ENCODE measurements at regions of chr11 and their contacts with region 1.

Region 1: DNA sequence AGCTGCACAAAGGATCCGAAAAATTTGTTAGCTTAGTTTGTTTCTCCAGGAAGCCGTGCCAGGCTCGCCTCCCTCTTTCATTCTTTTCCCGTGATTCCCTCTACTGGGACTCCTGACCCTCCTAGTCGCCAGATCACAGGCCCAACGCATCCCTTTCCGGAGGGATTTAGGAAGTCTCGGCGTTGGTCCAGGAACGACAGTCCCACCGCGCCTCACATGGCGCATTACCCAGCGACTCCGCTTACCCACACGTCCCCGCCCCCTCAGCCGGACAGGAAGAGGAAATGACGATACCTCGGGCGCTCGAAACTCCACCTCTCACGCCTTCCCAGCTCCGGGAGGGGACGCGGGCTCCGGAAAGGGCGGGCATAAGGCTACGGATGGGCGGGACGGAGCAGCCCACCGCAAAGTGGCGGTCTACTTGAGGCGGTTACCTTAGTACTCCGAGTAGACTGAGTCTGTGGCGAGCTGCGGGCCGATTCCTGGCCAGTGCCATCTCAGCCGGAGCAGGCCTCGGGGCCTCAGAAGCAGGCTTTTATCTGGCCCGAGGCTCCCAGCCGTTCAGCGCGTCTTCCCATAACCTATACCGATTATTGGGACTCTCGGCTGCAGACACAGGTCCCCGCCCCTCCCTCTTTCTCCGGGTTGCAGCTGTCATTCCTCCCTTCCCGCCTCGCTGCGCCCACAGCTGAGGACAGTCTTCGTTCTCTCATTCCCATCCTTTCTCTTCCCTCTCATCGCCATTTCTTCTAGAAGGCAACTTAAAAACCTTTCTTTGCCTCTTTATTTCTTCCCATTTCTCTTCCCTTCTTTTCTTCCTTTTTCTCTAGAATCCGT is at the start of gene CCDC15:
- DNase-seq: peak; percentile 99
- H3K4me3 Mint-ChIP-seq: no peak within 1 kb of the TSS
- H3K27ac Mint-ChIP-seq: no peak within 1 kb of the TSS
- H3K4me1 Mint-ChIP-seq: peaks cover 6% of the 10 kb centered on the region
- H3K27me3 Mint-ChIP-seq: no peaks in the 10 kb centered on the region
- total RNA-seq, gene CCDC15: 4.1 and 4.5 TPM in 2 replicates

Region 2: DNA sequence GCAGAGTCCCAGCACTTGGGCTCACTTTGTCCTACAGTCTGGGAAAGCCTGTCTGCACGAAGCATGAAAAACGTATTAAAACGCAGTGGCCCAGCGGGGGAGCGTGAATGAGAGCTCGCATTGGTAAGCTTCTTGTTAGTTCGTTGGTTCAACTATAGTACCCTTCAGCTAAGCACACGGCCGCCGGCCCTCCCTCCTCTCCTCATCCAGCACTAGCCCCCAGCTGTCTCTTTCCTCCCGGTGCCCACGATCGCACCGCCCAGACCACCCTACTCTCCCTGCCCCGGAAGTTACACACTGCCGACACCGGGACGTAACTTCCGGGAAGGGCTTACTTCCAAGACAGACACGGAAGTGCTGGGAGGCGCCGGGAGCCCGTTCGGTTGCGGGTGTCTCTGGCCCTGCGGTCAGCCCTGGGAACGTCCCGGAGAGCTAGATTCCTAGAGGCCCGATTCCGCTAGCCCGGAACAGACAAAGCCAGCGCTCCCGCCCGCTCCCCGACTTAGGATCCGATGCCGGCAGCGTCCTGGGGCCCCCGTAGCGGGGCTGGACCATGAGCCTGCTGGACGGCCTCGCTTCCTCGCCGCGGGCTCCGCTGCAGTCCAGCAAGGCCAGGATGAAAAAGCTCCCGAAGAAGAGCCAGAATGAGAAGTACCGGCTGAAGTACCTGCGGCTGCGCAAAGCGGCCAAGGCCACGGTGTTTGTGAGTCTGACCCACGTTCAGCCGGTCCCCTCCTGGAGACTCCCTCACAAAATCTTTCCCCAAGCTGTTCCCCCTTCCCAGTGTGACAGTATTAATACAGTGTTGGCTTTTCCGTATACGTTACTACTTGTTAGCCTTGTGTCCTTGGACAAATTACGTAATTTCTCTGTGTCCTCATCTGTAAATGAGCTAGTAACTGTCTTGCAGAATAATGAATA is 331.2 kb before region 1 on chr11 and contains the start of gene TBRG1:
- intact Hi-C with region 1: loop called (anchors 2 kb)
- DNase-seq: peak; percentile 95
- H3K4me3 Mint-ChIP-seq: peak within 1 kb of the TSS; percentile 98
- H3K27ac Mint-ChIP-seq: peak within 1 kb of the TSS; percentile 96
- H3K4me1 Mint-ChIP-seq: peaks cover 22% of the 10 kb centered on the region
- H3K27me3 Mint-ChIP-seq: peaks cover 15% of the 10 kb centered on the region
- total RNA-seq, gene TBRG1: 31.0 and 31.6 TPM in 2 replicates

Region 3: DNA sequence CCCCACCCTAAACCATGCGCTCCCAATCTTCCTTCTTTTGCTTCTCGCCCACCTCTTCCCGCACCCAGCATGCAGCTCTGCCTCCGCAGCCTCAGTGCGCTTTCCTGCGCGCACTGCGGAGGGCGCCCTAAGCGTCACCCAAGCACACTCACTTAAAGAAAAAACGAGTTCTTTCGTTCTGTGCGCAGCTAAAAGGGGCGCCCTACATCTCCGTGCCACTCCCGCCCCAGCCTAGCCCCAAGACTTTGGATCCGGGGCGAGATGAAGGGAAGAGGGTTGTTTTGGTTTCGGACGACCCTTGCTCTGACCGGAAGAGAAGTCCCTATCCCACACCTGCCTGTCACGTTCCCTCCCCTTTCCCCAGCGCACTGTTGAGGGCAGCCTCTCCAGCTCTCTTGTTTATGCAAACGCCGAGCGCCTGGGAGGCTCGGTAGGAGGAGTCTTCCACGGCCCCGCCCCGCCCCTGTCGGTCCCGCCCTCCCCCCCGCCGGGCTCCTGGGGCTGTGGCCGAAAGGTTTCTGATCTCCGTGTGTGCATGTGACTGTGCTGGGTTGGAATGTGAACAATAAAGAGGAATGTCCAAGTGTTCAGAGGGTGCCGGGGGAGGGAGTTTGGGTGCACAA is 207.2 kb before region 1 on chr11:
- intact Hi-C with region 1: loop called (anchors 5 kb)
- DNase-seq: peak; percentile 92
- H3K4me3 Mint-ChIP-seq: peak overlapping the region; percentile 98
- H3K27ac Mint-ChIP-seq: peak overlapping the region; percentile 95
- H3K4me1 Mint-ChIP-seq: peaks cover 34% of the 10 kb centered on the region
- H3K27me3 Mint-ChIP-seq: peaks cover 22% of the 10 kb centered on the region

Region 4: DNA sequence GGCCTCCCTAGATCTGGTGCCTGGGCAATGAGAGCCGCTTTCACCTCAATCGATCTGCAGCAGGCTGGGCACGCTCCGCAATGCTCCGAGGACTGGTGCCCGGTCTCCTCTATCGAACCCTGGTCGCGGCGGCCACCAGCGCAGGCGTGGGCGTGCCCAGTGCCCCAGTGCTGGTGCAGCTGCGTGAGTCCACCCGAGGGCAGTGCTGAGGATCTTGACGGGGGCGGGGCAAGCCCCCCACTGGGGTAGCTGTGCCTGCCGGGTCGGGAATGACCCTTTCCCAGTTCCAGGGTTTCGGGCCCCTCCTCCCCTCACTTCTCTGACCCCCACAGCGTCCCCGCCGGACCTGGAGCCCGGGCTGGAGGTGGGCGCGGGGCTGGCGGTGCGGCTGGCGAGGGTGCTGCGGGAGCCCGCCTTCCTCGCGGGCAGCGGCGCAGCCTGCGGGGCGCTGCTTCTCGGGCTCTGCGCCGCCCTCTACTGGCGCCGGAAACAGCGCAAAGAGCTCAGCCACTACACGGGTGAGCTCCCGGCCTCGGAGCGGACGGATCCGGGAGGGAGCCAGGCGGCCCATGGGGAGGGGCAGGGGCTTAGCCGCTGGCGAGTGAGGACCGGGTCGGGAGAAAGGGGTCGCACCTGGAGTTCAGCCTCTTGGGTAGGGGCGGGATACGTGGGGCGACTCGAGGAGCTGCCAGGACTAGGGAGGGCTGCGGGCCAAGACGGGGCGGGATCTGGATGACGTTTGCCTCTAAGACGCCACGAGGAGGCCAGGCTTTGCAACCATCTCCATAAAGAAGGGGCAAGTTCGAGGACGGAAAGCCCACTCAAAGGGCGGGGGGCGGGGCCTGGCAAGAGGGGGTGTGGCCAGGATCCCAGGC is 77.8 kb before region 1 on chr11:
- intact Hi-C with region 1: loop called (anchors 1 kb)
- DNase-seq: peak; percentile 95
- H3K4me3 Mint-ChIP-seq: peak overlapping the region; percentile 91
- H3K27ac Mint-ChIP-seq: peak overlapping the region; percentile 86
- H3K4me1 Mint-ChIP-seq: peaks cover 11% of the 10 kb centered on the region
- H3K27me3 Mint-ChIP-seq: peaks cover 47% of the 10 kb centered on the region

Region 5: GRCh38 chr11:124920870-124921609 is 32.9 kb before region 1 on chr11:
- intact Hi-C with region 1: loop called (anchors 2 kb)
- DNase-seq: peak; percentile 90
- H3K4me3 Mint-ChIP-seq: peak overlapping the region; percentile 67
- H3K27ac Mint-ChIP-seq: no peak overlapping the region
- H3K4me1 Mint-ChIP-seq: peaks cover 11% of the 10 kb centered on the region
- H3K27me3 Mint-ChIP-seq: peaks cover 14% of the 10 kb centered on the region

Region 6: GRCh38 chr11:125062931-125063428 is 109.0 kb after region 1 on chr11 and contains the start of gene SLC37A2:
- intact Hi-C with region 1: loop called (anchors 5 kb)
- DNase-seq: peak; percentile 84
- H3K4me3 Mint-ChIP-seq: peak within 1 kb of the TSS; percentile 87
- H3K27ac Mint-ChIP-seq: no peak within 1 kb of the TSS
- H3K4me1 Mint-ChIP-seq: peaks cover 2% of the 10 kb centered on the region
- H3K27me3 Mint-ChIP-seq: peaks cover 65% of the 10 kb centered on the region
- total RNA-seq, gene SLC37A2: 0.07 TPM in 2 replicates

Region 7: DNA sequence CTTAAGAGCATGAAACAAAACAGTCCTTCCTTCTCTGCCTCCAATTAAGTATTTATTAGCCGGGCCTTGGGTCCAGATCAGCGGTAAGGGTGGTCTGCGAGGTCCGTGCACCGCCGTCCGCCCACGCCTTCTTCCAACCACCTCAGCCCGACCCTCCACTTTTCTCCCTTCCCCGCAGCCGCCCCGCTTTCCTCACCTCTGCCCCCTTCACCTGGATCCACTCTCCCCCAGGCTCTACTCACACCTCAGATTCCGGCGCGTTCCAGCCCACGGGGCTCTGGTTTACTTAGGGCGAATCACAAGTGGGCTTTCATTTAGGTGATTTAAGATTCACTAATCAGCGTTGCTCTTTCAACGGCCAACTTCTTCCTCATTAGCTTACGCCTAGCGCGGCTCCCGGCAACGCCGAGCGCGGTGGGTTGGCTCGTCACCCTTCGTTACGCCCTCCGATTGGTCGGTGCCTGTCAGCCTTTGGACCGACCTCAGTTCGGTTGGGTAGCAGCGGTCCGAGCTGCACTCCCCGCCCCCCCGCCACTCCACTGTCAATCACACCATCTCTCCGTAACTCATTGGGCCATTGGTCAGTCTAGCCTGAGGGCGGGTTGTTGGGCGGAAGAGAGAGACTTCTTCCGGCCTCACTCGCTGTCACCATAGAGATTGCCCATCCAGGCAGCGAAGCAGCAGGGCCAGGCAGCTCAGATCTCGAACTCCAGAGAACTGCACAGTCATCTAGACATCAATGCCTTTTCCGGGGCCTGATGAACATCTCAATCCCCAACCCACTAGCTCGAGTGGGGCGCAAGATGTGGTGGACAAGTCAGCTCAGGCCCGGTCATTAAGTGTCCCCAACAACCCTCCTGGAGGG is 157.6 kb after region 1 on chr11 and contains the start of gene TMEM218:
- intact Hi-C with region 1: loop called (anchors 1 kb)
- DNase-seq: peak; percentile 99
- H3K4me3 Mint-ChIP-seq: peak within 1 kb of the TSS; percentile 100
- H3K27ac Mint-ChIP-seq: peak within 1 kb of the TSS; percentile 100
- H3K4me1 Mint-ChIP-seq: peaks cover 20% of the 10 kb centered on the region
- H3K27me3 Mint-ChIP-seq: peaks cover 2% of the 10 kb centered on the region
- total RNA-seq, gene TMEM218: 17.3 and 18.2 TPM in 2 replicates

Region 8: DNA sequence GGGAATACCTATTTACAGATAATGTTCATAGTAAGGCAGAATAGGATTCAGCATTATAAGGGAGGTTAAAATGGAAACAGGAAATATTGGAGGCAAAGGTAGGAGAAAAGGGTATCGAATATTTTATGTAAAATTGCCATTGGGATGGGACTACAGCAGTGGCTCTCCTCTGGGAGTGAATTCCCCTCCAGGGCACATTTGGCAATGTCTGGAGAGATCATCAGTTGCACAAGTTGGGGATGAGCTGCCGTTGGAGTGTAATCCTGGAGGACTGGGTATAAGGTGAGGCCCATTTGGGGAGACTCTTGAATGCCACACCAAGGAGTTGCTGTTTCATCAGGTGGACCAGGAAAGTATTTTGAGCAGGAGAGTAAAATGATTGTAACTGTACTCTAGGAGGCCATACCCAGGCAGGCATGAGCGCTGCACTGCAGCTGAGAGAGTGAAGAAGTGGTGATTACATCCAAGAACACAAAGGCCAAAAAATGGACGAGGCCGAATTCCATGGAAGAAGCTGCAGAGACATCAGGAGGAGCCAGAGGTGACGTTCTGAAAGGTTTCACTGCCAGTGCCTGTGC is 735.4 kb after region 1 on chr11:
- intact Hi-C with region 1: no loop called
- DNase-seq: no peak
- H3K4me3 Mint-ChIP-seq: no peak overlapping the region
- H3K27ac Mint-ChIP-seq: no peak overlapping the region
- H3K4me1 Mint-ChIP-seq: no peaks in the 10 kb centered on the region
- H3K27me3 Mint-ChIP-seq: no peaks in the 10 kb centered on the region

Region 9: DNA sequence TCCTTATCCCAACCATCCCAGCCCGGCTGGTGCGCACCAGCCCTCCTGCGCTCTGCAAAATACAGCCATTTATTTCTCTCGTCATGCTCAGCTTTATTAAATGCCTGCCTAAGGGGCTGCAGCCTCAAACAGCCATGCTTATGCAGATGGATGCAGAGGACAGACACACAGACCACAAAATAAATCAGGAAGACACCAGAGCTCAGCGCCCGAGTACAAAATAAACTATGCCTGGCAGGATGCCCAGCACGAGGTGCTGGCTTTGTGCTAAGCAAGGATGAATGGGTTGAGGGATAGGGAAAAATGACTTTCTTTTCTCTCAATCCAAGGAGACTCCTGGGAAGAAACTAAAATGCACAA is 1186.9 kb after region 1 on chr11:
- intact Hi-C with region 1: no loop called
- DNase-seq: no peak
- H3K4me3 Mint-ChIP-seq: no peak overlapping the region
- H3K27ac Mint-ChIP-seq: no peak overlapping the region
- H3K4me1 Mint-ChIP-seq: no peaks in the 10 kb centered on the region
- H3K27me3 Mint-ChIP-seq: peaks cover 15% of the 10 kb centered on the region

Measured in activated CD4-positive, alpha-beta T cell treated with anti-CD3 and anti-CD28 coated beads, Interleukin-2, amount 10 ng/mL, durations not matched to agents 24 days and 14 days (primary cell).